ENCODE measurements at regions of chr1 and their contacts with region 1.

Region 1: DNA sequence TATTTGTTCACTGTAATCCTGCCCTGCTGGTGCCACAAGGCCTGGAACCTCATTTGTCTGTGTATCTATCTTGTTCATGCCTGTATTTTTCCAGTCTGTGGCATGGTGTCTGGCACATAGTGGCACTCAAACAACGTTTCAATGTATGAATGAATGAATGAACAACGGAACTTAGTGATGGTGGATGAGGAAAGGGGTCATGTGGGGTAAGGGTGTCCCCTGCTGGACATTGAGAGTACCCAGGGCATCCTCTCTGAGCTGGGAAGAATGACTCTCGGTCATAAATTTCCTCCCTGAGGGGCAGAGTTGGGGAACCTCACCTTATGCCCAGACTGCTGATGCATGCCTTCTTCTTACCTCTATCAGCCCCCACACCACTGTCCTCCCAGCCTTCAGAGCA is 18.9 kb upstream of the ZNF683 start:
- DNase-seq: no peak
- ATAC-seq: peak; percentile 80
- H3K4me3 ChIP-seq: no peak overlapping the region
- H3K27ac ChIP-seq: no peak overlapping the region
- H3K4me1 ChIP-seq: no peaks in the 10 kb centered on the region
- H3K27me3 ChIP-seq: no peaks in the 10 kb centered on the region; a peak in 1 of 4 replicates
- CTCF ChIP-seq: peak; percentile 47 to 62 (median 54)
- EP300 ChIP-seq: no peak
- POLR2A ChIP-seq: no peak
- RAD21 ChIP-seq: peak; percentile 57

Region 2: DNA sequence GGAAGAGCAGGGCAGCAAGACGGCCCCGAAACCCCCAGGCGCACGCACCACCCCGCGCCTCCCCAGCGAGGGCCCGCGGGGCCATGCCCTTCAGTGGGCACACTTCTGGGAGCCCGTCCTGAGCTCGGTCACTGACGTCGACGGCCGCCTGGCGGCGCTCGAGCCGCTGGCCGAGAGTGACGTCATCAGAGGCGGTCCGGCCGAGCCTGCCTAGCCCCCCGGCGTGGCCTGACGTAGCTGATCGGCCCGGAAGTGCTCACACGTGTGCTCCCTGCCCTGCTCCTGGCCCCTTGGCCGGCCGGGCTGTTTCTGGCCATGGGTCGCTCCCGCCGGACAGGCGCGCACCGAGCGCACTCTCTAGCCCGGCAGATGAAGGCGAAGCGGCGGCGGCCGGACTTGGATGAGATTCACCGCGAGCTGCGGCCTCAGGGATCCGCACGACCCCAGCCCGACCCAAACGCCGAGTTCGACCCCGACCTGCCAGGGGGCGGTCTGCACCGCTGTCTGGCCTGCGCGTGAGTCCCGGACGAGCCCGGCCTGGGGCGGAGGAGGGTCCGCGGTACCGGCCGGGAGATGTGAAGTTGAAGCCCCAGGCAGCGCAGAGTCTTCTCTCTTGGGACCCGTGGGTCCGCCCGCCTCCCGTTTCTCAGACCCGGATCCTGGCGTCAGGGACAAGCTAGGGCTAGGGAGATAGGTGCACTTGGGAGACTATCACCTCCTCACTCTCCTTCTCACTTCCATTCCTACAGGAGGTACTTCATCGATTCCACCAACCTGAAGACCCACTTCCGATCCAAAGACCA is 221.6 kb before region 1 on chr1 and contains the start of gene ZNF593:
- CTCF ChIA-PET with region 1: interaction called, 3 read pairs
- POLR2A ChIA-PET with region 1: no interaction called
- RAD21 ChIA-PET with region 1: no interaction called
- SMC1A ChIA-PET with region 1: no interaction called
- in situ Hi-C with region 1: no loop called
- intact Hi-C with region 1: loop called (anchors 10 kb)
- DNase-seq: peak; percentile 61
- ATAC-seq: peak; percentile 98
- H3K4me3 ChIP-seq: peak within 1 kb of the TSS; percentile 97
- H3K27ac ChIP-seq: peak within 1 kb of the TSS; percentile 79
- H3K4me1 ChIP-seq: peaks cover 7% of the 10 kb centered on the region
- H3K27me3 ChIP-seq: no peaks in the 10 kb centered on the region
- CTCF ChIP-seq: peak; percentile 93 to 98 (median 95)
- EP300 ChIP-seq: no peak
- POLR2A ChIP-seq: peak; percentile 92
- RAD21 ChIP-seq: peak; percentile 36; the same call in 1 of the 2 replicates
- polyA plus RNA-seq, gene ZNF593: 7.7 to 20.1 TPM

Measured in GM12878 (cell line).